Activated naive CD4-positive, alpha-beta T cell treated with anti-CD3 and anti-CD28 coated beads for 36 hours (primary cell): ENCODE measurements at regions of chr20 and their contacts with region 1.

Region 1: DNA sequence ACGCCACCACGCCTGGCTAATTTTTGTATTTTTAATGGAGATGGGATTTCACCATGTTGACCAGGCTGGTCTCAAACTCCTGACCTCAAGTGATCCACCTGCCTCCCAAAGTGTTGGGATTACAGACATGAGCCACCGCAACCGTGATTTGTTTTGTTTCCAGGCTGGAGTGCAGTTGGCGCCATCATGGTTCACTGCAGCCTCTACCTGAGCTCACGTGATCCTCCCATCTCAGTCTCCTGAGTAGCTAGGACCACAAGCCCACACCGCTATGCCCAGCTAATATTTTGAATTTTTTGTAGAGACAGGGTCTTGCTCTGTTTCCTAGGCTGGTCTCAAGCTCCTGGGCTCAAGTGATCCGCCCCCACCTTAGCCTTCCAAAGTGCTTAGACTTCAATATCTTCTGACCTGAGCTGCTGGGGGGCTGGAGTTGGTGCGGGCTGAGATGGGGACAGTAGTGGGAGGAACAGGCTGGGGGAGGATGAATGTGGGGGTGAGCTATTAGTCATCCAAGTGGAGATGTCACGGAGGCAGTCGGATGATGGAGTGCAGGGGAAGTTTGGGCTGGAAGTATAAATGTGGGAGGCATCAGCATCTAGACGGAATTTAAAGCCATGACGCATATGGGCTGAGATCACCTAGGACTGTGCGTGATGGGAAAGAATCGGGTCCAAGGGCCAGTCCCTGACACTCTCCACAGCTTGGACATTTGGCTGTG is 23.1 kb upstream of the ZMYND8 start:
- DNase-seq: no peak
- H3K4me3 Mint-ChIP-seq: no peak overlapping the region
- H3K27ac Mint-ChIP-seq: no peak overlapping the region
- H3K4me1 Mint-ChIP-seq: peaks cover 18% of the 10 kb centered on the region
- H3K27me3 Mint-ChIP-seq: no peaks in the 10 kb centered on the region

Region 2: DNA sequence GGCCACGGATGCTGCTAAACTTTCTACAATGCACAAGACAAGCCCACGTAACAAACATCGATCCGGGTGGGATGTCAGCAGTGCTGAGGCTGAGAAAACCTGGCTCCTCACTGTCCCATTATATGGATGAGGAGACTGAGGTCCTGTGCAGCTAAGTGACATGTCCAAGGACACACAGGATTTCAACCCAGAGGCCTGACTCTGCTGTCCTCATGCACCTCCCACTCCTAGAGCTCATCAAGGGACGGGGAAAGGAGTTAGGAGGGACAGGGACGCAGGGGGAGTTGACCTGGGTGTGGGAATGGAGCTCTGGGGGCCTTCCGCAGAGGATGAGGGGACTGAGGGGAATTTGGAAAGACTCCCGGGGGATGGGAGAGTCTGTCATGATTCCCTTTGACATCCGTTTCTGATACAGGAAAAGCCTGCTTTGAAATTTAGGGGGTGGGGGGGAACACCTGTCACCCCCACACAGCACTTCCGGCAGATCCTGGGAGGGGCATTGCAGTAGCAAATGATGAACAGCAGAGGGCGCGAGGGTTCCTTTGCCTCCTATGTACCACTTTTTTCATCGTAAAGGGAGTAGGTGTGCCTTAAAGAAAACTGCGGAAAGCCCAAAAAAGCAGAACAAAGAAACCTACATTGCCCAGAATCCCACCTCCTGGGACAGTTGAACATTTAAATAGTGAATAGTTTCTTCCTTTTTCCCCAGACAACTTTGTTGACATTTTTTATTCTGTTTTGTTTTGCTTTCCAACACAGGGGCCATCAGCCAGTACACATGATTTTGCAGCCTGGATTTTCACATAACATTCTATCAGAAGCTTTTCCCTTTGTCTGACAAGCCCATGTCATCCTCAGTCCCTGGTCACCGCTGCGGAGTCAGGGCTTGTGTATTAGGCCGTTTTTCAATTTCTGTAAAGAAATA is 621.6 kb before region 1 on chr20:
- CTCF ChIA-PET with region 1: interaction called, 3 read pairs
- intact Hi-C with region 1: loop called (anchors 1 kb)
- DNase-seq: peak; percentile 73
- H3K4me3 Mint-ChIP-seq: no peak overlapping the region
- H3K27ac Mint-ChIP-seq: no peak overlapping the region
- H3K4me1 Mint-ChIP-seq: no peaks in the 10 kb centered on the region
- H3K27me3 Mint-ChIP-seq: no peaks in the 10 kb centered on the region

Region 3: GRCh38 chr20:46883892-46884291 is 495.7 kb before region 1 on chr20:
- CTCF ChIA-PET with region 1: no interaction called
- intact Hi-C with region 1: no loop called
- DNase-seq: no peak
- H3K4me3 Mint-ChIP-seq: no peak overlapping the region
- H3K27ac Mint-ChIP-seq: no peak overlapping the region
- H3K4me1 Mint-ChIP-seq: no peaks in the 10 kb centered on the region
- H3K27me3 Mint-ChIP-seq: peaks cover 25% of the 10 kb centered on the region

Region 4: GRCh38 chr20:47220161-47220582 is 159.4 kb before region 1 on chr20:
- CTCF ChIA-PET with region 1: interaction called, 24 read pairs
- intact Hi-C with region 1: loop called (anchors 1 kb)
- DNase-seq: peak; percentile 64
- H3K4me3 Mint-ChIP-seq: no peak overlapping the region
- H3K27ac Mint-ChIP-seq: no peak overlapping the region
- H3K4me1 Mint-ChIP-seq: no peaks in the 10 kb centered on the region
- H3K27me3 Mint-ChIP-seq: no peaks in the 10 kb centered on the region

Region 5: DNA sequence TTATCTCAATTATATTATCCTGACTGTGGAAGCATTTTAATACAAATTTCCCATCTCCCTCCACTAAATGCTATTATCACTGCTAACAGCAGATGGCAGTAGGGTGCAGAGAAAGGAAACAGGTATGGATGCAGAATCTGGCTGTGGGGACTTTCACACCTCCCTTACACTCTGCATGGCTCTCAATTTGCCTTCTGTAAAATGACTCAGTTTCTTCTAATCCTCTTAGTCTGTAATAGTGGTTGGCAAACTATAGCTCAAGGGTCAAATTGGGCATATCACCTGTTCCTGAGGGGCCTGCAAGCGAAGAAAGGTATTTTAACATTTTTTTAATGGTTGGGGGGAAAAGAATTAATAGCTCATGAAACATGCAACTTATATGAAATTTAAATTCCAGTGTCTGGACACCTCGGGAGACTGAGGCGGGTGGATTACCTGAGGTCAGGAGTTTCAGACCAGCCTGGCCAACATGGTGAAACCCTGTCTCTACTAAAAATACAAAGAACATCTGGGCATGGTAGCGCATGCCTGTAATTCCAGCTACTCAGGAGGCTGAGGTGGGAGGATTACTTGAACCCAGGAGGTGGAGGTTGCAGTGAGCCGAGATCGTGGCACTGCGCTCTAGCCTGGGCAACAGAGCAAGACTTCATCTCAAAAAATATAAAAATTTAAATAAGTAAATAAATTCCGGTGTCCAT is 106.5 kb before region 1 on chr20:
- CTCF ChIA-PET with region 1: interaction called, 391 read pairs
- intact Hi-C with region 1: loop called (anchors 1 kb)
- DNase-seq: peak; percentile 70
- H3K4me3 Mint-ChIP-seq: peak overlapping the region; percentile 43
- H3K27ac Mint-ChIP-seq: peak overlapping the region; percentile 96
- H3K4me1 Mint-ChIP-seq: peaks cover 44% of the 10 kb centered on the region
- H3K27me3 Mint-ChIP-seq: no peaks in the 10 kb centered on the region

Region 6: GRCh38 chr20:47348539-47349142 is 31.0 kb before region 1 on chr20:
- CTCF ChIA-PET with region 1: interaction called, 12 read pairs
- intact Hi-C with region 1: no loop called
- DNase-seq: no peak
- H3K4me3 Mint-ChIP-seq: no peak overlapping the region
- H3K27ac Mint-ChIP-seq: no peak overlapping the region
- H3K4me1 Mint-ChIP-seq: peaks cover 12% of the 10 kb centered on the region
- H3K27me3 Mint-ChIP-seq: no peaks in the 10 kb centered on the region

Region 7: GRCh38 chr20:47411161-47411560 is 31.6 kb after region 1 on chr20:
- CTCF ChIA-PET with region 1: interaction called, 10 read pairs
- intact Hi-C with region 1: no loop called
- DNase-seq: no peak
- H3K4me3 Mint-ChIP-seq: no peak overlapping the region
- H3K27ac Mint-ChIP-seq: no peak overlapping the region
- H3K4me1 Mint-ChIP-seq: peaks cover 29% of the 10 kb centered on the region
- H3K27me3 Mint-ChIP-seq: no peaks in the 10 kb centered on the region